ENCODE measurements at regions of chr12 and their contacts with region 1.

Region 1: DNA sequence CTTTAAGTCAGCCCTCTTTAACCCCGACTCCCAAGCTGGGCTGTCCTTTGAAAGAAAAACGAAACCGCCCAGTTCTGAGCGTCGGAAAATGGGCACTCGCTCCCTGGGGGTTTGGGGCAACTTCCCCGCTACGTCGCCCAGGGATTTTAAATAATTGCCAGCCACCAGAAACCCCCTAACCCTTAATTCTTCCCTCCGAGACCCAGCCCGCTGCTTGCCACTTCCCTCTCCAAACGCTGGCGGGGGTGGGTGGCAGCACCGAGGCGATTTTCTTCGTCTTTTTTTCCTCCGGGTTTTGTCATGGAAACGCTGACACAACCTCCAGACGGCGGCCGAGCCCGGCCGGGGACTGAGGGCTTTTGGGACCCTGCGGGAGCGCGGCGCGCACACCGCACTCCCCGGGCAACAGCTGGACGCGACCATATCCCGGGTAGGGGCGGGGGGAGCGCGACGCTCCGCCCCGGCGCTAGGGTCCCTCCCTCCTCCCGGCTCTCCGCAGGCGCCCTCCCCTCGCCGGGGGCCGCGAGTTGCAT is at the start of gene CHST11:
- DNase-seq: peak; percentile 66 to 85 (median 70)
- H3K4me3 ChIP-seq: peak within 1 kb of the TSS; percentile 72 to 99
- H3K4me3 Mint-ChIP-seq: peak within 1 kb of the TSS; percentile 98 to 100 (median 99)
- H3K27ac ChIP-seq: peak within 1 kb of the TSS; percentile 83
- H3K27ac Mint-ChIP-seq: peak within 1 kb of the TSS; percentile 85 to 98 (median 96)
- H3K4me1 ChIP-seq: peaks cover 34% of the 10 kb centered on the region
- H3K4me1 Mint-ChIP-seq: peaks cover 28 to 66% (median 39%) of the 10 kb centered on the region in 4 donors
- H3K27me3 ChIP-seq: no peaks in the 10 kb centered on the region
- H3K27me3 Mint-ChIP-seq: no peaks in the 10 kb centered on the region
- total RNA-seq, gene CHST11: 55.1 to 55.8 TPM

Region 2: DNA sequence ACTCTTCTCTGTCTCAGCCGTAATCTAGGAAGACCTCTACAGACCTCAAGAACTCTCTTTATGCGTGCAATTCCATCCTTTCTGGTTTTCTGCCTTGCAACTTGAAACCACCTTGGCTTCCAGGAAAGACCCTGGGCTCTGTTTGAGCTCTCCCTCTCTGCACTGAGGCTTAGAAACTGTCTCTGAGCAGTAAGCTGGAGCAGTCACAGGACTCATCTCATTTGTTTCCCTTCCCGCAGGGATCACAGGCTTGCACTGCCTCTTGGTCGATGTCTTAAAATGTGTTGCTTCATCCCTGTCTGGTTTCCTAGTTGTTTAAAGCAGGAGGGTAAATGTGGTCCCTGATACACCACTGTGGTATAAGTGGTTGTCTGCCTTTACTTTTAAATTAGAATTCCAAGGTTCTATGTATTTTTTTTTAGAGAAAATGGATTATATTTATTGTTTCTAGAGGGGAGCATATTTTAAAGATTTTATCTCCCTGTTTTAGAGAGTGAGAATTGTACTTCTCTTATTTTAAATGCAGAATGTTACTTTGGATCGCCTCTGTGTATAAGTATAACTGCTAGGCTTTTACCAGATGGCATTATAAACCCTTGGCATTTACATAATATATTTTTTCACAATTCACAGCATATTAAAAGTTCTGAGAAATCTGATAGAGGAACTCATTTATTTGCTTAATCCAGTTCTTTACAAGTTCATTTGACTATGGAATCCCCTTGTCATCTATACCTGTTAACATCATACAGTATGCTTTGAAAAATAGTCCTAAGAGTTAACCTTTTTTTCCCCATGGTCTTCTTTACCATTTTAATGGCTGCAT is 126.6 kb before region 1 on chr12:
- CTCF ChIA-PET with region 1: no interaction called
- POLR2A ChIA-PET with region 1: no interaction called
- intact Hi-C with region 1: no loop called
- DNase-seq: no peak
- H3K4me3 ChIP-seq: no peak overlapping the region
- H3K4me3 Mint-ChIP-seq: no peak overlapping the region
- H3K27ac ChIP-seq: no peak overlapping the region
- H3K27ac Mint-ChIP-seq: peak overlapping the region in 1 of 7 donors; percentile 69
- H3K4me1 ChIP-seq: no peaks in the 10 kb centered on the region
- H3K4me1 Mint-ChIP-seq: peaks cover 0 to 1% (median 0%) of the 10 kb centered on the region in 4 donors
- H3K27me3 ChIP-seq: no peaks in the 10 kb centered on the region
- H3K27me3 Mint-ChIP-seq: no peaks in the 10 kb centered on the region

Region 3: GRCh38 chr12:104381731-104382480 is 74.6 kb before region 1 on chr12:
- CTCF ChIA-PET with region 1: interaction called, 8 read pairs
- POLR2A ChIA-PET with region 1: interaction called, 13 read pairs
- intact Hi-C with region 1: loop called (anchors 2 kb)
- DNase-seq: peak; percentile 74 to 81 (median 78)
- H3K4me3 ChIP-seq: no peak overlapping the region
- H3K4me3 Mint-ChIP-seq: peak overlapping the region in 1 of 8 donors; percentile 14
- H3K27ac ChIP-seq: no peak overlapping the region
- H3K27ac Mint-ChIP-seq: peak overlapping the region in 2 of 7 donors; percentile 3 to 66
- H3K4me1 ChIP-seq: peaks cover 7% of the 10 kb centered on the region
- H3K4me1 Mint-ChIP-seq: peaks cover 0 to 11% (median 5%) of the 10 kb centered on the region in 4 donors
- H3K27me3 ChIP-seq: no peaks in the 10 kb centered on the region
- H3K27me3 Mint-ChIP-seq: peaks cover 0 to 4% of the 10 kb centered on the region in 2 donors

Region 4: GRCh38 chr12:104399740-104400612 is 56.5 kb before region 1 on chr12:
- CTCF ChIA-PET with region 1: no interaction called
- POLR2A ChIA-PET with region 1: no interaction called
- intact Hi-C with region 1: no loop called
- DNase-seq: no peak
- H3K4me3 ChIP-seq: no peak overlapping the region
- H3K4me3 Mint-ChIP-seq: no peak overlapping the region
- H3K27ac ChIP-seq: no peak overlapping the region
- H3K27ac Mint-ChIP-seq: peak overlapping the region in 2 of 7 donors; percentile 7 to 28
- H3K4me1 ChIP-seq: no peaks in the 10 kb centered on the region
- H3K4me1 Mint-ChIP-seq: peaks cover 4 to 11% (median 7%) of the 10 kb centered on the region in 4 donors
- H3K27me3 ChIP-seq: no peaks in the 10 kb centered on the region
- H3K27me3 Mint-ChIP-seq: no peaks in the 10 kb centered on the region

Region 5: DNA sequence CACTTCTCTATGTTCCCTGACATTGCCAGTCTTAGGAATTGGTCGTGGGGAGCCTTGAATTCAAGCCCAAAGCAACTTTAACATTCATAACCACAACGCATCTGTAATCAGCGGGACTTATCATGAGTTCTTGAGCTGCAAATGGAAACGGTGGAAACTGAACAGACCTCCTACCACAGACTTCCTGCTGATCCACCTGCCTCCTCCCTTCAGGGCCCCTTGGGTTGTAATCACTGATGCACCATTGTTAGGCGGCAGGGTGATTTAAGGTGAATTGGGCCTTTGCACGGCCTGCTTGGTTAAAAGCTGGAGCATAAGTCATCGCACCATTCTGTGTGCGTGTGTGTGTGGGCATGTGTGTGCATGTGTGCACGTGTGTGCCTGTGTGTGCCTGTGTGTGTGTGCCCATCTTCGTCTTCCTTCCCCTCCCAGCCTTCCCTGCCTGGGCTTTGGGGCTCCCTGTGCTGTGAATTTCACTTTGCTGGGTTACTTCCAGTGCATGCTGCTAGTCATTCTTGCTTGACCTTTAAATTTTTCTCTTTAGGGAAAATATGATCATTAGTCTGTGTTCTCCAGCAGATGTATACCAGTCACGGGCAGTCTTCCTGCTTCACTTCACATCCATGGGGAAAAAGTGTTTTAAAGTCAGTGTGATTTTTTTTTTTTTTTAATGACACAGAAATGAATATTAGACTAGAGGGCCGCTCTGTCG is 29.3 kb after region 1 on chr12:
- CTCF ChIA-PET with region 1: interaction called, 8 read pairs
- POLR2A ChIA-PET with region 1: interaction called, 172 read pairs
- intact Hi-C with region 1: loop called (anchors 2 kb)
- DNase-seq: peak; percentile 64 to 87 (median 71)
- H3K4me3 ChIP-seq: peak overlapping the region in 1 of 2 donors; percentile 5
- H3K4me3 Mint-ChIP-seq: peak overlapping the region; percentile 46 to 86 (median 78)
- H3K27ac ChIP-seq: peak overlapping the region; percentile 22
- H3K27ac Mint-ChIP-seq: peak overlapping the region; percentile 88 to 95 (median 94)
- H3K4me1 ChIP-seq: peaks cover 93% of the 10 kb centered on the region
- H3K4me1 Mint-ChIP-seq: peaks cover 82 to 97% (median 90%) of the 10 kb centered on the region in 4 donors
- H3K27me3 ChIP-seq: no peaks in the 10 kb centered on the region
- H3K27me3 Mint-ChIP-seq: no peaks in the 10 kb centered on the region

Region 6: GRCh38 chr12:104569346-104570173 is 113.1 kb after region 1 on chr12:
- CTCF ChIA-PET with region 1: interaction called, 17 read pairs
- POLR2A ChIA-PET with region 1: interaction called, 58 read pairs
- intact Hi-C with region 1: loop called (anchors 2 kb)
- DNase-seq: peak; percentile 54 to 86 (median 60)
- H3K4me3 ChIP-seq: peak overlapping the region in 1 of 2 donors; percentile 1
- H3K4me3 Mint-ChIP-seq: peak overlapping the region in 7 of 8 donors; percentile 52 to 81 (median 72)
- H3K27ac ChIP-seq: peak overlapping the region; percentile 52
- H3K27ac Mint-ChIP-seq: peak overlapping the region; percentile 77 to 94 (median 84)
- H3K4me1 ChIP-seq: peaks cover 49% of the 10 kb centered on the region
- H3K4me1 Mint-ChIP-seq: peaks cover 50 to 78% (median 62%) of the 10 kb centered on the region in 4 donors
- H3K27me3 ChIP-seq: no peaks in the 10 kb centered on the region
- H3K27me3 Mint-ChIP-seq: no peaks in the 10 kb centered on the region

Region 7: GRCh38 chr12:104671407-104672098 is 215.1 kb after region 1 on chr12:
- CTCF ChIA-PET with region 1: interaction called, 3 read pairs
- POLR2A ChIA-PET with region 1: interaction called, 5 read pairs
- intact Hi-C with region 1: loop called (anchors 2 kb)
- DNase-seq: peak; percentile 46 to 97 (median 52)
- H3K4me3 ChIP-seq: peak overlapping the region in 1 of 2 donors; percentile 2
- H3K4me3 Mint-ChIP-seq: peak overlapping the region in 7 of 8 donors; percentile 14 to 91 (median 65)
- H3K27ac ChIP-seq: peak overlapping the region; percentile 34
- H3K27ac Mint-ChIP-seq: peak overlapping the region; percentile 81 to 97 (median 92)
- H3K4me1 ChIP-seq: peaks cover 50% of the 10 kb centered on the region
- H3K4me1 Mint-ChIP-seq: peaks cover 52 to 76% (median 61%) of the 10 kb centered on the region in 4 donors
- H3K27me3 ChIP-seq: no peaks in the 10 kb centered on the region
- H3K27me3 Mint-ChIP-seq: peaks cover 0 to 2% of the 10 kb centered on the region in 2 donors

Region 8: GRCh38 chr12:104958009-104958945 is 501.8 kb after region 1 on chr12 and contains the start of gene SLC41A2:
- CTCF ChIA-PET with region 1: no interaction called
- POLR2A ChIA-PET with region 1: interaction called, 5 read pairs
- intact Hi-C with region 1: loop called (anchors 2 kb)
- DNase-seq: peak; percentile 77 to 92 (median 81)
- H3K4me3 ChIP-seq: peak within 1 kb of the TSS; percentile 81 to 87
- H3K4me3 Mint-ChIP-seq: peak within 1 kb of the TSS; percentile 94 to 98 (median 97)
- H3K27ac ChIP-seq: peak within 1 kb of the TSS; percentile 68
- H3K27ac Mint-ChIP-seq: peak within 1 kb of the TSS; percentile 90 to 99 (median 96)
- H3K4me1 ChIP-seq: peaks cover 17% of the 10 kb centered on the region
- H3K4me1 Mint-ChIP-seq: peaks cover 13 to 30% (median 21%) of the 10 kb centered on the region in 4 donors
- H3K27me3 ChIP-seq: no peaks in the 10 kb centered on the region
- H3K27me3 Mint-ChIP-seq: peaks cover 0 to 3% of the 10 kb centered on the region in 2 donors
- total RNA-seq, gene SLC41A2: 3.6 to 3.7 TPM

Region 9: DNA sequence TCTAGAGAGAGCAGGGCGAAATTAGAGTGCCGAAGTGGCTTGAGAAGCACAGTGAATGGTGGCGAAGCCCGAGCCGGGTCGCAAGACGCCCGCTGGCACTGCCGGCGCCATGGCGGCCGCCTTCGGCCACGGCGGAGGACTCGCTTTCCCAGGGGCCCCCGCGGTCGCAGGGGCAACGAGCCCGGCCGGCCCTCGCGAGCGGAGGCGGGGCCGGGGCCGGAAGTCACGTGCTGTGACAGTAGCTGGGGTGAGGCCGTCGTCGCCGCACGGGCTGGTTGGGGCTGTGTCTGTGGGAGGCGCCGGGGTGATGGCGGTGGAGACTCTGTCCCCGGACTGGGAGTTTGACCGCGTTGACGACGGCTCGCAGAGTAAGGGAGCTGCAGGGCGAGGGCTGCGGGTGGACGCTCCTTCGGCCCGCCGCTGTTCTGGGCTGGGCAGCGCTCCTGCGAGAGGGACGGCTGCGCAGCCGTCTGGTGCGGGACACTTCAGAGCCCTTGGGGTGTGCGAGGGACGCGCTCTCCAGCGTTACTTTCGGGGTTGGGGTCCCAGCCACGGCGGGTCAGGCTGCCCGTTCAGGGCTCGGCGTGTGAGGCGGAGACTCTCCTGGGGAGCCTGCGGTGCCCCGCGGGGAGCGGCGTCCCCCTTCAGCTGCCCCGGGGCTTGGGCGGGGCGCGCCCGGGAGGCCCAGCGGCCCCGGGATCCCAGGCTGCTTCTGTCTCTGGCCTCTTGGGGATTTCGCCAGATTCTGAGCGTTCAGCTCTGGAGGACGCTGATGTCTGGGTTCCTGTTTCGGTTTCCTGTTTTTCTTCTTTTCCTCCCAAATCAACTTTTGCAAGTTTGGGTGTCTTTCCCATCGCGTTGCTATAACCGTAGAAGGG is 651.2 kb after region 1 on chr12 and contains the start of gene WASHC4:
- CTCF ChIA-PET with region 1: no interaction called
- POLR2A ChIA-PET with region 1: no interaction called
- intact Hi-C with region 1: loop called (anchors 5 kb)
- DNase-seq: peak; percentile 90 to 92 (median 92)
- H3K4me3 ChIP-seq: peak within 1 kb of the TSS; percentile 72 to 74
- H3K4me3 Mint-ChIP-seq: peak within 1 kb of the TSS; percentile 92 to 98 (median 97)
- H3K27ac ChIP-seq: peak within 1 kb of the TSS; percentile 92
- H3K27ac Mint-ChIP-seq: peak within 1 kb of the TSS; percentile 82 to 98 (median 96)
- H3K4me1 ChIP-seq: peaks cover 42% of the 10 kb centered on the region
- H3K4me1 Mint-ChIP-seq: peaks cover 28 to 49% (median 34%) of the 10 kb centered on the region in 4 donors
- H3K27me3 ChIP-seq: no peaks in the 10 kb centered on the region
- H3K27me3 Mint-ChIP-seq: peaks cover 14 to 19% of the 10 kb centered on the region in 2 donors
- total RNA-seq, gene WASHC4: 71.4 to 75.4 TPM

Measured in CD4-positive, alpha-beta memory T cell (primary cell).